H1 (cell line): ENCODE measurements at regions of chr5 and their contacts with region 1.

Region 1: GRCh38 chr5:141223112-141223783 is at the start of gene PCDHB14:
- DNase-seq: no peak
- H3K4me3 ChIP-seq: peak within 1 kb of the TSS; percentile 8 to 50 (median 29); a peak in 5 of 8 replicates
- H3K27ac ChIP-seq: no peak within 1 kb of the TSS
- H3K4me1 ChIP-seq: peaks cover 2 to 3% (median 3%) of the 10 kb centered on the region in 4 experiments; a peak in 2 of 7 replicates
- H3K27me3 ChIP-seq: no peaks in the 10 kb centered on the region
- CTCF ChIP-seq: peak in 2 of 3 experiments; percentile 50 to 64; a peak in 3 of 4 replicates
- EP300 ChIP-seq: no peak
- POLR2A ChIP-seq: no peak
- RAD21 ChIP-seq: peak; percentile 81 to 85
- total RNA-seq, gene PCDHB14: 2.7 and 2.9 TPM in 2 replicates

Region 2: DNA sequence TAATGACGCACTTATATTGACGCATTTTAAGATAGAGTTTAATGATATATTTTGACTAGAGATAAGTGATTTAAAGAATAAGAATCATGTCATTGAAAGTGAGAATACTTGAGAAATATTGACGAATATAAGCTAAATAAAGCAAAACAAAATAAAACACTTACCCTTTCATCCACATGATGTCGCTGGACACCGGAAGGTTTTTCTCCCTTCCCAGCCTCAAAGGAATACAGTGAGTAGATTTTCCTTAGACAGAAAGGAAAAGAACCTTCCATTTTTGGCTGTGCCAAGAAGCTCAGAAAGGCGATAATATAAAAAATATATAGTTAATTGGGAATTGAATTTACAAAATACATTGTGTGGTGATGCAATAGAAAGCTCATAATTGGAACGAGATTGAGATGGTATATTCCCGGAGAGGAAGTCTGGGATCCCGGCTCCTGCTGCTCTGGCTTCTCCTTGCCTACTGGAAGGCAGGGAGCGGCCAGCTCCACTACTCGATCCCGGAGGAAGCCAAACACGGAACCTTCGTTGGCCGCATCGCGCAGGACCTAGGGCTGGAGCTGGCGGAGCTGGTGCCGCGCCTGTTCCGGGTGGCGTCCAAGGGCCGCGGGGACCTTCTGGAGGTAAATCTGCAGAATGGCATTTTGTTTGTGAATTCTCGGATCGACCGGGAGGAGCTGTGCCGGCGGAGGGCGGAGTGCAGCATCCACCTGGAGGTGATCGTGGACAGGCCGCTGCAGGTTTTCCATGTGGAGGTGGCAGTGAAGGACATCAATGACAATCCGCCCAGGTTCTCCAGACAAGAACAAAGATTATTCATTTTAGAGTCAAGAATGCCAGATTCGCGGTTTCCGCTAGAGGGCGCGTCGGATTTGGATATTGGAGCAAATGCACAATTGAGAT is 401.6 kb before region 1 on chr5 and contains the start of gene PCDHA5:
- CTCF ChIA-PET with region 1: no interaction called
- POLR2A ChIA-PET with region 1: no interaction called
- DNase-seq: no peak
- H3K4me3 ChIP-seq: no peak within 1 kb of the TSS
- H3K27ac ChIP-seq: no peak within 1 kb of the TSS
- H3K4me1 ChIP-seq: no peaks in the 10 kb centered on the region
- H3K27me3 ChIP-seq: no peaks in the 10 kb centered on the region
- CTCF ChIP-seq: peak in 1 of 3 experiments; percentile 10; a peak in 1 of 4 replicates
- EP300 ChIP-seq: no peak
- POLR2A ChIP-seq: no peak
- RAD21 ChIP-seq: no peak
- total RNA-seq, gene PCDHA5: 0.52 and 0.76 TPM in 2 replicates

Region 3: GRCh38 chr5:141192110-141192732 is 31.0 kb before region 1 on chr5 and contains the start of gene PCDHB10:
- CTCF ChIA-PET with region 1: interaction called, 26 read pairs
- POLR2A ChIA-PET with region 1: no interaction called
- DNase-seq: peak in 1 of 2 experiments; percentile 92
- H3K4me3 ChIP-seq: peak within 1 kb of the TSS; percentile 14 to 46 (median 35); a peak in 6 of 8 replicates
- H3K27ac ChIP-seq: no peak within 1 kb of the TSS
- H3K4me1 ChIP-seq: no peaks in the 10 kb centered on the region; a peak in 1 of 7 replicates
- H3K27me3 ChIP-seq: no peaks in the 10 kb centered on the region
- CTCF ChIP-seq: peak; percentile 72 to 83 (median 83)
- EP300 ChIP-seq: no peak
- POLR2A ChIP-seq: no peak
- RAD21 ChIP-seq: peak; percentile 82 to 84
- total RNA-seq, gene PCDHB10: 1.8 and 1.9 TPM in 2 replicates

Region 4: DNA sequence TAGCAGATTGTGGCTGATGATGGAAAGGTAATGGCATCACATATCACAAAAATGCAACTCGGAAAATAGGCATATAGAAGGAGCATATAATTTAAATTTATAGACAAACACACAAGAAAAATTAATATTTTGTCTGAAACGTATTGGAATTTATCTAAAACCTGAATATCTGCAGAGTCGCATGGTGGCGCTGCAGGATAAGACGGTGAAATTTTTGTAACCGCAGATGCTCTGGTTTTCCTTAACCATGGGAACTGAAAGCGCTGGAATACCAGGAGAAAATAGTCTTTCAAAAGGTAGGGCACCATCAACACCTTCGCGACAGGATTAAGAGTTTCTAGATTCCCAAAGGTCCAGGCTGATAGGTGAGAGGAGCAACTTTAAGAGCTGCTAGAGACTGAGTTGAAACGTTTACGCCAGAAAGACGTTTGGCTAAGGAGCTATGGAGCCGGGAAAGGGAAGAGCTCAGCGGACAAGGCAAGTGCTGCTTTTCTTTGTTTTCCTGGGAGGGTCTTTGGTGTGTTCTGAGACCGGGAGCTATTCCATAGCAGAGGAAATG is 10.9 kb after region 1 on chr5:
- CTCF ChIA-PET with region 1: interaction called, 43 read pairs
- POLR2A ChIA-PET with region 1: no interaction called
- DNase-seq: no peak
- H3K4me3 ChIP-seq: no peak overlapping the region
- H3K27ac ChIP-seq: no peak overlapping the region
- H3K4me1 ChIP-seq: no peaks in the 10 kb centered on the region
- H3K27me3 ChIP-seq: no peaks in the 10 kb centered on the region
- CTCF ChIP-seq: no peak
- EP300 ChIP-seq: no peak
- POLR2A ChIP-seq: no peak
- RAD21 ChIP-seq: peak; percentile 37 to 59

Region 5: GRCh38 chr5:141320225-141321169 is 97.2 kb after region 1 on chr5 and contains the start of gene TAF7:
- CTCF ChIA-PET with region 1: interaction called, 15 read pairs
- POLR2A ChIA-PET with region 1: interaction called, 3 read pairs
- DNase-seq: peak; percentile 77 to 95
- H3K4me3 ChIP-seq: peak within 1 kb of the TSS; percentile 79 to 99 (median 92)
- H3K27ac ChIP-seq: peak within 1 kb of the TSS; percentile 95
- H3K4me1 ChIP-seq: no peaks in the 10 kb centered on the region
- H3K27me3 ChIP-seq: no peaks in the 10 kb centered on the region
- CTCF ChIP-seq: peak; percentile 77 to 93 (median 80)
- EP300 ChIP-seq: no peak
- POLR2A ChIP-seq: peak; percentile 95 to 98
- RAD21 ChIP-seq: peak; percentile 45 to 57
- total RNA-seq, gene TAF7: 99.4 and 101 TPM in 2 replicates

Region 6: GRCh38 chr5:141420855-141421496 is 197.7 kb after region 1 on chr5 and contains the start of gene PCDHGA11:
- CTCF ChIA-PET with region 1: interaction called, 13 read pairs
- POLR2A ChIA-PET with region 1: no interaction called
- DNase-seq: peak in 1 of 2 experiments; percentile 91
- H3K4me3 ChIP-seq: peak within 1 kb of the TSS; percentile 15 to 52 (median 32); a peak in 6 of 8 replicates
- H3K27ac ChIP-seq: no peak within 1 kb of the TSS
- H3K4me1 ChIP-seq: no peaks in the 10 kb centered on the region; a peak in 1 of 7 replicates
- H3K27me3 ChIP-seq: peaks cover 0 to 12% (median 6%) of the 10 kb centered on the region in 4 experiments; a peak in 4 of 7 replicates
- CTCF ChIP-seq: peak; percentile 59 to 77 (median 75)
- EP300 ChIP-seq: no peak
- POLR2A ChIP-seq: no peak
- RAD21 ChIP-seq: peak; percentile 88 to 90
- total RNA-seq, gene PCDHGA11: 8.2 and 8.3 TPM in 2 replicates

Region 7: DNA sequence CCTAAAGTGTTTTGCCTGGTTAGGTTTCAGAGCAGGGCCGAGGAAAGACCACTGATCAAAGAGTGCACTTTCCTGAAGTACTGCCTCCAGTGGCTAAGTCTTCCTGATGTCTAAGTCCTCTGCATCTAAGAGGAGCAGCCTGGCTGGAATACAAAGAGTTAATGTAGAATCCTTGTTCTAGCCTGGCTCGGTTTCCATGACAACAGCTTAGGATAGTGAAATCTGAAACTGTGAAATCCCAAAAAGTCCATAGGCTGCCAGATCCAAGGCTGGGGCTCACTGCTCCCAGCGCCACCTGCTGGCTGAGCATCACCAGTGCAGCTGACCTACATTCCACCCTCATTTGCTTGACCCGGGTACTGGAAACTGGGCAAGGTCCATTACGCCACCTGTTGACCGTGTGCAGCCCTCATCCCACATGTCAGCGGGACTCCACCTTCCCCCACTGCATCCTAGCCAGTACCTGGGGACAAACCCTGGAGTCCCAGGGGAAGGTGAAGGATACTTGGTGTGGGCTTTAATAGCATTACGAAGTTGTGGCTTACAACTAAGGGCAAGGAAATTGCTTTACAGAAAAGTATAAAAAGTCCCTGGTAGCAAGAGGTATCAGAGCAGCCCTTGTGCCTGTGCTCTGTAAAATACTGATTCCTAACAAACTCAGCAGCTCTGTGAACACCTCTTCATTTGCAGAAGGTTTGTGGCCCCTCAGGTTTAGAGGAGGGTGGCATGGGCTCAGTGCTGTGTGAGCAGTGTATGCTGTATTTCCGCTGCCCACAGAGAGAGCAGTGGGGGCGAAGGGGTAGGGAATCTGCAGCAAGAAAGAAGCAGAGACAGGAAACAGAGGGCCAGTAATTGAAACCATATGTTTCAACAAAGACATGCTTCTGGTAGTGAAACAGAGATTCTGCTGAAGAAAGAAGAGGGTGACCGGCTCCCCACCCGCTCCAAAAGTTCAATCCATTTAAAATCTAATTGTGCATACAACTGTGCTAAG is 301.7 kb after region 1 on chr5:
- CTCF ChIA-PET with region 1: interaction called, 29 read pairs
- POLR2A ChIA-PET with region 1: no interaction called
- DNase-seq: peak; percentile 90 to 95
- H3K4me3 ChIP-seq: no peak overlapping the region
- H3K27ac ChIP-seq: peak overlapping the region; percentile 26; the same call in 1 of the 2 replicates
- H3K4me1 ChIP-seq: peaks cover 2 to 15% (median 8%) of the 10 kb centered on the region in 4 experiments; a peak in 6 of 7 replicates
- H3K27me3 ChIP-seq: no peaks in the 10 kb centered on the region
- CTCF ChIP-seq: peak; percentile 99 to 100 (median 99)
- EP300 ChIP-seq: peak in 1 of 2 experiments; percentile 68; a peak in 1 of 3 replicates
- POLR2A ChIP-seq: no peak
- RAD21 ChIP-seq: peak; percentile 90 to 91